Natural killer cell (primary cell): ENCODE measurements at regions of chr22 and their contacts with region 1.

Region 1: DNA sequence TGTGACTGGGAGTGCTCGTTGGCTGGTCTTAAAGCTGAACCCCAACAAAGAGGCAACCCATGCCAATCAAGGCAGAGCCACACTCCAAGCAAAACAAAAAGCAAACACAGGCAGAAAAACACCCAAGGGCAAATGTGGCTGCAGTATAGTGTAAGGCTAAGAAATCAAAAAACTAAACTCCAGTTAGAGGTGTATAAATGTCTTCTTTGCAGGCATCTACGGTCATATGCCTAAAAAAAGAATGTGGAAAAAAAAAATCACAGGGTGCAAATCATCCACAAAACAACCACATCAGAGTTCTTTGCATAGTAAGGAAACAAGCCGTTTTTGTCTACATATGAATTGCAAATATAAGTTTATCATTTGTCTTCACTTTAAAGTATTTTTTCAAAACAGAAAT is 27.8 kb downstream of the ARFGAP3 start:
- DNase-seq: no peak
- ATAC-seq: no peak
- H3K4me3 ChIP-seq: no peak overlapping the region
- H3K4me3 Mint-ChIP-seq: peak overlapping the region; percentile 55
- H3K27ac ChIP-seq: no peak overlapping the region
- H3K27ac Mint-ChIP-seq: peak overlapping the region; percentile 79 to 82
- H3K4me1 ChIP-seq: peaks cover 26% of the 10 kb centered on the region
- H3K4me1 Mint-ChIP-seq: peaks cover 15 to 19% of the 10 kb centered on the region in 2 donors
- H3K27me3 ChIP-seq: no peaks in the 10 kb centered on the region
- H3K27me3 Mint-ChIP-seq: no peaks in the 10 kb centered on the region
- CTCF ChIP-seq: no peak

Region 2: DNA sequence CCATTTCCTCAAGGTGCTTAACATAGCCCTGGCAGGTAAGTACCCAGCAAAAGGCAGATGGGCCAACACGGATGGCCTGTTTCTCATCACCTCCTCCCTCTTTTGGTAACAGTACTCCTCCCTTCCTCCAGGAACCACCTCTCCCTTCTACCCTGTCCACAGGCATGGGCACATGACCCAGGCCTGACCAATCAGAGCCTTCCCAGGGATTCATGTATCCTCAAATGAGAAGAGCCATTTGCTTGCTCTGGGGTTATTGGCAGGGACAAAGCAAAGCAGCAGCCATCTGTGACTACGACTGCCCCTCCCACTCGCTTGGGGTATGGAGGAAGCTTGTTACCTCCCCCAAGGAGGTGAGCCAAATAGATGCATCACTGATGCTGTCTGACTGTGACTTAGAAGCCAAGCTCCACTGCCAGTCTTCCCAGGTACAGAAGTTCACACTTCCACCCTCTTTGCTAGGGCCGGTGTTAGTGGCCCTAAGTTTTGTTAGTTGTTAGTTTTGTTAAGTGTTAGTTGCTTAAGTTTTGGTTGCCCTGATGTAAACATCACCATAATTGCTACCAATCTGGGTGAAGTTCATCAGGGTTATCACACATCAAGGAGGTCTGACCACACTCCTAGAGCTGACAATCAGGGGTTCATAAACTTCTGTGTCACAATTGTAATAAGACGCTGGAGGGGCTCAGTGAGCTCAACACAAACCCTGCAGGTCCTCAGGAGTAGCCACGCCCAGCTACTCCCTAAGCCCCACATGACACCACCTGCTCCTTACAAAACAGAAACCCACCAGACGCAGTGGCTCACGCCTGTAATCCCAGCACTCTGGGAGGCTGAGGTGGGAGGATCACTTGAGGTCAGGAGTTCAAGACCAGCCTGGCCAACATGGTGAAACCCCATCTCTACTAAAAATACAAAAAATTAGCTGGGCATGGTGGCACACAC is 29.6 kb before region 1 on chr22:
- intact Hi-C with region 1: loop called (anchors 1 kb)
- DNase-seq: peak; percentile 23 to 53
- ATAC-seq: peak; percentile 85 to 86 (median 85)
- H3K4me3 ChIP-seq: no peak overlapping the region
- H3K4me3 Mint-ChIP-seq: peak overlapping the region; percentile 68
- H3K27ac ChIP-seq: peak overlapping the region; percentile 80
- H3K27ac Mint-ChIP-seq: peak overlapping the region; percentile 90 to 93
- H3K4me1 ChIP-seq: peaks cover 23% of the 10 kb centered on the region
- H3K4me1 Mint-ChIP-seq: peaks cover 35 to 39% of the 10 kb centered on the region in 2 donors
- H3K27me3 ChIP-seq: no peaks in the 10 kb centered on the region
- H3K27me3 Mint-ChIP-seq: no peaks in the 10 kb centered on the region
- CTCF ChIP-seq: no peak

Region 3: GRCh38 chr22:42856865-42857704 is 27.8 kb after region 1 on chr22 and contains the start of gene ARFGAP3:
- intact Hi-C with region 1: loop called (anchors 2 kb)
- DNase-seq: peak; percentile 98
- ATAC-seq: peak; percentile 90 to 98 (median 91)
- H3K4me3 ChIP-seq: peak within 1 kb of the TSS; percentile 72
- H3K4me3 Mint-ChIP-seq: peak within 1 kb of the TSS; percentile 93
- H3K27ac ChIP-seq: peak within 1 kb of the TSS; percentile 96
- H3K27ac Mint-ChIP-seq: peak within 1 kb of the TSS; percentile 93 to 94
- H3K4me1 ChIP-seq: peaks cover 23% of the 10 kb centered on the region
- H3K4me1 Mint-ChIP-seq: peaks cover 10 to 17% of the 10 kb centered on the region in 2 donors
- H3K27me3 ChIP-seq: no peaks in the 10 kb centered on the region
- H3K27me3 Mint-ChIP-seq: no peaks in the 10 kb centered on the region
- CTCF ChIP-seq: no peak
- total RNA-seq, gene ARFGAP3: 46.3 to 58.0 (median 53.8) TPM

Region 4: DNA sequence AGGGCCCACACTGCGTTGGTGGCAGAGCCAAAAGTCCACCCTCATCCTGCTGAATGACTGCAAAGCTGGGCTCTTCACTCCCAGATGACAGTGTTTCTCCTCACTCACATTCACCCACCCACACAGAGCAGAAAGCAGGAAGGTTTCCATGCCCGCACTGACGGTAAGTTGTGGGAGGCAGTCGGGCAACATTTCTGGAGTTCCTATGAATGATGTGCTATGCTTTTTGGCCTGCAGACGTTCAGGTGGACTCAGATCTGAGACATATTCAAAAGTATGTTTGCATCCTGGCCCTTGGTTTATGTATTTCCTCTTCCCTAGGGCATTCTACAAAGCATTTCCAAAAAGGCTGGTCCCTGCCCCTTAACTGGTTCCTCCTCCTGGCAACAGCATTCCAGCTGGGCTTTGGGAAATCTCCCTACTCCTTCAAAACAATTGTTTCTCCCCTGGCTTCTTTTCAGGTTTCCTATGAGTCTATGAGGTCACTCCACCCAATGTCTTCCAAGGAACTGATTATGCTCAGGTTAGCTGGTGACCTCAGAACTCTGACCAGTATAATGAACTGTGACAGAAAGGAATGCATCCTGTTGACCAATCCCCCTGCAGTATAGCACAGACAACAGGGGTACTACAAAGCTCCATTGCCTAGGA is 149.3 kb after region 1 on chr22:
- intact Hi-C with region 1: no loop called
- DNase-seq: no peak
- ATAC-seq: no peak
- H3K4me3 ChIP-seq: no peak overlapping the region
- H3K4me3 Mint-ChIP-seq: no peak overlapping the region
- H3K27ac ChIP-seq: no peak overlapping the region
- H3K27ac Mint-ChIP-seq: peak overlapping the region in 1 of 2 donors; percentile 38
- H3K4me1 ChIP-seq: peaks cover 9% of the 10 kb centered on the region
- H3K4me1 Mint-ChIP-seq: peaks cover 23 to 31% of the 10 kb centered on the region in 2 donors
- H3K27me3 ChIP-seq: no peaks in the 10 kb centered on the region
- H3K27me3 Mint-ChIP-seq: no peaks in the 10 kb centered on the region
- CTCF ChIP-seq: no peak